Activated CD4-positive, alpha-beta T cell treated with anti-CD3 and anti-CD28 coated beads for 36 hours (primary cell): ENCODE measurements at regions of chr1 and their contacts with region 1.

Region 1: DNA sequence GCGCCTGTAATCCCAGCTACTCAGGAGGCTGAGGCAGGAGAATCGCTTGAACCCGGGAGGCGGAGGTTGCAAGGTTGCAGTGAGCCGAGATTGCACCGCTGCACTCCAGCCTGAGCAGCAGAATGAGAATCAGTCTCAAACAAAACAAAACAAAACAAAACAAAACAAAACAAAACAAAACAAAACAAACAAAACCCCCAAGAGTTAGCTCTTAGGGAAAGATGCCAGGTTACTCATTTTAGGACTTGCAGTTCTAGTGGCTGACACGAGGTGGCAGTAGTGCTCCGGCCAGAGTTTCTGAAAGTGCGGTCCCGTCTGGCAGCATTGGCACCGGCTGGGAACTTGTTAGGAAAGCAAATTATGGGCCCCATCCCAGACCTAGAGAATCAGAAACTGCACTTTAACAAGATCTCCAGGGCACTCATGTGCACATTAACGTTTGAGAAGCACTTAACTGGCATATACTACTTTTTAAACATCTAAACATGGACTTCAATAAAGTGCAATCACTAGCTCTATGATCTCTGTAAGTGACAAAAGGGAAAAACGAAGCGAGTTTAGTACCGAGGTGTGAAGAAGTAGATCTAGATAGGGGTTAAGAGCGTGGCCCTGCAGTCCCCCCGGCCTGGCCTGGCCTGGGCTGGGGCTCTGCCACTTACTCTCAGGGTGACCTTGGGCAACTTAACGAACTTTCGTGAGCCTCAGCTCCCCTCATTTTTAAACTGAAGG is 41.9 kb upstream of the TNFRSF1B start:
- DNase-seq: peak; percentile 86
- ATAC-seq: peak; percentile 35
- H3K4me3 Mint-ChIP-seq: no peak overlapping the region
- H3K27ac Mint-ChIP-seq: peak overlapping the region; percentile 20
- H3K4me1 Mint-ChIP-seq: peaks cover 49% of the 10 kb centered on the region
- H3K27me3 Mint-ChIP-seq: no peaks in the 10 kb centered on the region

Region 2: GRCh38 chr1:12138196-12139168 is 13.6 kb after region 1 on chr1:
- CTCF ChIA-PET with region 1: interaction called, 13 read pairs
- POLR2A ChIA-PET with region 1: no interaction called
- intact Hi-C with region 1: no loop called
- DNase-seq: no peak
- ATAC-seq: no peak
- H3K4me3 Mint-ChIP-seq: no peak overlapping the region
- H3K27ac Mint-ChIP-seq: no peak overlapping the region
- H3K4me1 Mint-ChIP-seq: peaks cover 13% of the 10 kb centered on the region
- H3K27me3 Mint-ChIP-seq: no peaks in the 10 kb centered on the region

Region 3: GRCh38 chr1:12161662-12162458 is 37.0 kb after region 1 on chr1:
- CTCF ChIA-PET with region 1: interaction called, 11 read pairs
- POLR2A ChIA-PET with region 1: interaction called, 9 read pairs
- intact Hi-C with region 1: loop called (anchors 1 to 5 kb)
- DNase-seq: peak; percentile 89
- ATAC-seq: peak; percentile 84
- H3K4me3 Mint-ChIP-seq: peak overlapping the region; percentile 15
- H3K27ac Mint-ChIP-seq: peak overlapping the region; percentile 91
- H3K4me1 Mint-ChIP-seq: peaks cover 73% of the 10 kb centered on the region
- H3K27me3 Mint-ChIP-seq: no peaks in the 10 kb centered on the region

Region 4: DNA sequence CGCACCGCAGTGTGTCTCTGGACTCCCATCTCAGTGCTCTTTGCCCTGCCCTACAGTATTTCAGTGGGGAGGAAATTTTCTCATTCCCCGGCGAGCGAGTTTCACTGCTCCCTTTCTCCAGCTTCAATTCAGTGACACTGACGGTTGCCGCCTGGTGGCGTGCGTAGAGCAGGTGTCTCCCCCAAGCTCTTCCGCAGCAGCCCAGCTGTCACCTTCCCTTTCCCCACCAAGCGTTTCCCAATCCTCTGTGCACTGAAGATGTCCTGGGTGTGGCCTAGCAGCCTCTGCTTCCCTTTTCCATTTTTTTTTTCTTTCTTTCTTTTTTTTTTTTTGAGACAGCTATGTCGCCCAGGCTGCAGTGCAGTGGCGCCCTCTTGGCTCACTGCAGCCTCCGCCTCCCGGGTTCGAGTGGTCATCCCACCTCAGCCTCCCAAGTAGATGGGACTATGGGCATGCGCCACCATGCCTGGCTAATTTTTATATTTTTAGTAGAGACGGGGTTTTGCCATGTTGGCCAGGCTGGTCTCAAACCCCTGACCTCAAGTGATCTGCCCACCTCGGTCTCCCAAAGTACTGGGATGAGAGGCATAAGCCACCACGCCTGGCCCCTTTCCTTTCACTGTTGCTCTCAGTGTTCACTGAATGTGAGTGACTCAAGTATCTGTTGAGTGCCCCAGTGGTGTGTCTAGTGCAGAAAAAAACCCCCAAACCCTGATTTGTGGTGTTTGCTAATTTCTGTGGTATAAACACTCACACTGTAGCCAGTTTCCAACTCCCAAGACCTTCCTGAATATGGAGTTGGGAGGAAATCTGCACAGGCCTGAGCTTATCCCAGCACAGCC is 72.0 kb after region 1 on chr1:
- CTCF ChIA-PET with region 1: interaction called, 44 read pairs
- POLR2A ChIA-PET with region 1: no interaction called
- intact Hi-C with region 1: no loop called
- DNase-seq: no peak
- ATAC-seq: no peak
- H3K4me3 Mint-ChIP-seq: no peak overlapping the region
- H3K27ac Mint-ChIP-seq: peak overlapping the region; percentile 42
- H3K4me1 Mint-ChIP-seq: peaks cover 18% of the 10 kb centered on the region
- H3K27me3 Mint-ChIP-seq: no peaks in the 10 kb centered on the region

Region 5: DNA sequence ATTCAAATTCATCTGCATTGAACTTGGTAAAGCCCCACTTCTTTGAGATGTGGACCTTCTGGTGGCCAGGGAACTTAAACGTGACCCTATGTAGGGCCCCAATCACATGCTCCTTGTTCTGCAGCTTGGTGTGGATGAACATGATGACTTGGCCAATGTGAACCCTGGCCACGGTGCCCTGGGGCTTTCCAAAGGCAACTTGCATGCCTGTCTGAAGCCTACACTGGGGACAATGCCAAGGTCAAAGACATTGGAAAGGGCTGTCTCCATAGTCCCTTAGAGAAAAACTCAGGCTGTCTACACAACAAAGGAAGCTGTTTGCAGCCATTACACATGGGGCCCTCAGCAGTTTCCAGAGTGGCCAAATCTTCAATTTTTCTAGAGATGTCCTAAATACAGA is 96.0 kb after region 1 on chr1:
- CTCF ChIA-PET with region 1: interaction called, 33 read pairs
- POLR2A ChIA-PET with region 1: no interaction called
- intact Hi-C with region 1: no loop called
- DNase-seq: no peak
- ATAC-seq: no peak
- H3K4me3 Mint-ChIP-seq: no peak overlapping the region
- H3K27ac Mint-ChIP-seq: no peak overlapping the region
- H3K4me1 Mint-ChIP-seq: no peaks in the 10 kb centered on the region
- H3K27me3 Mint-ChIP-seq: peaks cover 3% of the 10 kb centered on the region

Region 6: GRCh38 chr1:12275369-12275768 is 150.5 kb after region 1 on chr1:
- CTCF ChIA-PET with region 1: interaction called, 16 read pairs
- POLR2A ChIA-PET with region 1: interaction called, 3 read pairs
- intact Hi-C with region 1: no loop called
- DNase-seq: peak; percentile 74
- ATAC-seq: no peak
- H3K4me3 Mint-ChIP-seq: no peak overlapping the region
- H3K27ac Mint-ChIP-seq: no peak overlapping the region
- H3K4me1 Mint-ChIP-seq: no peaks in the 10 kb centered on the region
- H3K27me3 Mint-ChIP-seq: no peaks in the 10 kb centered on the region